ENCODE measurements at regions of chr1 and their contacts with region 1.

Region 1: DNA sequence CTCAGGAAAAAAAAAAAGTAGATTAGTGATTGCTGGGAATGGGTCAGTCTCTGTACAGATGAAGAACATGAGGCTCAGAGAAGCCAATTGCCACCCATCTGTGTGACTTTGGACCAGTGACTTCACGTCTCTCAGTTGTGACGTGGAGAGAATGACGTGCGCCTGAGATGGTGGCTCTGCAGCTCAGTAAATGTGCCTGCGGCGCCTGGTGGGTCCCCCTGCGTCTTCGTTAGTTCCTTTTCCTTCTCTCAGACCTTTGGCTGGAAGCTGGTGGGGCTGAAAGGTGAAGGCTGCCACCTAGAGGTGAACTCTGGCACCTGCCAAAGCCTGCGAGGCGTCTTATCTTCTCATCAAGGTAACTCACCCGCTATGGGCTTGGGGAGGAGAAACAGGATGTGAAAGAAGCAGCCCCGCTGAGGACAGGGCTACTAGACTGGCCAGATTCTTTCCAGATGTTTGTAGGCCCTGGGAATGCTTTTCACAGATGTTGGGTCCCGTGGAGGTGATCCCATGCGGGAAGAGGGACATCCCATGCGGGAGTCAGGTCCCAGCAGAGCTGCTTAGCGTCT is 8.7 kb upstream of the E2F2 start:
- DNase-seq: peak; percentile 95 to 98
- H3K4me3 ChIP-seq: no peak overlapping the region
- H3K27ac ChIP-seq: no peak overlapping the region
- H3K4me1 ChIP-seq: peaks cover 0 to under 1% (median 0%) of the 10 kb centered on the region in 4 experiments; a peak in 2 of 7 replicates
- H3K27me3 ChIP-seq: no peaks in the 10 kb centered on the region
- CTCF ChIP-seq: peak; percentile 82 to 97 (median 94)
- EP300 ChIP-seq: peak in 1 of 2 experiments; percentile 53; a peak in 1 of 3 replicates
- POLR2A ChIP-seq: no peak
- RAD21 ChIP-seq: peak; percentile 97 to 98

Region 2: GRCh38 chr1:23524716-23525401 is 14.9 kb before region 1 on chr1:
- CTCF ChIA-PET with region 1: interaction called, 32 read pairs
- POLR2A ChIA-PET with region 1: interaction called, 4 read pairs
- DNase-seq: no peak
- H3K4me3 ChIP-seq: no peak overlapping the region
- H3K27ac ChIP-seq: no peak overlapping the region
- H3K4me1 ChIP-seq: peaks cover 6 to 17% (median 9%) of the 10 kb centered on the region in 4 experiments
- H3K27me3 ChIP-seq: peaks cover 1 to 9% (median 5%) of the 10 kb centered on the region in 4 experiments; a peak in 6 of 7 replicates
- CTCF ChIP-seq: no peak
- EP300 ChIP-seq: no peak
- POLR2A ChIP-seq: no peak
- RAD21 ChIP-seq: no peak

Region 3: DNA sequence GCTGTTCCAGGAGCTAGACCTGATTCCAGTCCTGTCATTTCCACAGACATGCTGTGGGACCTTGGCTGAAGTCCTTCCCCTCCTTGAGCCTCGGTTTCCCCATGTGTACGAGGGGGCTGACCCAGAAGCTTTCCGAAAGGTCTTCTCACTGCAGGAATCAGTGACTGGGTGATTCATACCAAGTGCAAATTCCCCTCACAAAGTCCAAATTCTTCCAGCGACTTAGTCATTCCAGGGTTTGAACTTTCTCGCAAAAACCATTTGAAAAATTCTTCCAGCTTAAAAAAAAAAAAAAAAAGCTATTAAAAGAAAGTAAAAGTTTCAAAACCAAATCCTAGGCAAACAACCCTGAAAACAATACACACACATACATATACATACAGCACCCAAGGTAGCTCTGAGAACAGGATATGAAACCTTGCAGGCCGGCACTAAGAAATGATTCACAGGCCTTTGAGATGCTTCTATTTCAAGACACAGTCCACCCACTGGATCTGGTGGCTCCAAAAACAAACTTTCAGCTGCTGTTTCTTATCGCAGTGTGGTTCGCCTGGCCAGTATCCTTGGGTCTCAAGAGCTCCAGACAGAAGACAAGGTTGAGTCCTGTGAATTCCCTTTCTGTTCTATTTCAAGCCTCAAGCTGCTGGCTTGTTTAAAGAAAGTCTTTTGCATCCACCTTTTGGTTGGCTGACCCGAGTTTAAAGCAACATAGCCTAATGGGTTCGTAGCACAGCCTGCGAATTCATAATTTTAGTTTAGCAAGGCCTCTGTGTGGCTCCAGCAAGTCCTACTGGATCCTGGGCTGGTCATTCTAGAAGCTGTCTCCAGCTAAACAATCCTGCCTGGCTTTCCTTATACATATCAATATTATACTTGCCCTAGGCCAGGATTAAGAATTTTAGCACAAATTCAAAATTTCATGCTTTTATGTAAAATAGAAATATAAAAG is 37.5 kb after region 1 on chr1:
- CTCF ChIA-PET with region 1: interaction called, 16 read pairs
- POLR2A ChIA-PET with region 1: no interaction called
- DNase-seq: no peak
- H3K4me3 ChIP-seq: no peak overlapping the region
- H3K27ac ChIP-seq: no peak overlapping the region
- H3K4me1 ChIP-seq: peaks cover 2 to 6% (median 3%) of the 10 kb centered on the region in 4 experiments; a peak in 4 of 7 replicates
- H3K27me3 ChIP-seq: no peaks in the 10 kb centered on the region
- CTCF ChIP-seq: no peak
- EP300 ChIP-seq: no peak
- POLR2A ChIP-seq: no peak
- RAD21 ChIP-seq: no peak

Region 4: DNA sequence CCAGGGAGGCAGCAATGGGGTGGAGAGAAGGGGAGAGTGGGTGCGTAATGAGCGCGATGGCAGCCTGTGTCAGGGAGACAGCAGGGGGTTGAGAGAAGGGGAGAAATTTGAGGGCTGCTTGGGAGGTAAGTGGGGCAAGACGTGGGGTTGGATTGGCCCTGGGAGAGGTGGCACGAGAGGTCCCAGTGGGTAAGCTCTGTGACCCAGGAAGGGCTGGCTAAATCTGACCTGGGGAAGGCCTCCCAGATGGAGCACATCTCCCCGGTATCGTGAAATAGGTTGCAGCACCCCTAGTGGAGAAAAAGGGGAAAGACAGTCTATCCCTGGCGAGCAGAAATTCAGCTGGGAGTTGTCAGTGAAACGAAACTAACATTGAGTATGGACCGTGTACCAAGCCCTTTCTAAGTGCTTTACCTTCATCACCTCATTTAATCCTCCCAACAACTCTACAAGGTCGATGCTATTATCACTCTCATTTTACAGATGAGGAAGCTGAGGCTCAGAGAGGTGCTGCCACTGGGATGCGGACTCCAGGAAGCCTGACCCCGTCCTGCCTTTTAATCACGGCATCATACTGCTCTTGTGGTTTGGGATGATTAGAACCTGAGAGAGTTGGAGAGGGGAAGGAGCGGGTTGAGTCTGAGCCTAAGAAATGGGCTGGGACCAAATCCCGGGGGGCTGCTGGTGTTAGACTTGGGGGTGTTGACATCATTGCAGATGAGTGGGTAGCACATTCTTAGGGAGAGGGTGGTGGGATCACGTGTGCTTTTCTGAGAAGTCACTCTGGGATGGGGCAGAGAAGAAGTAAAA is 95.3 kb after region 1 on chr1:
- CTCF ChIA-PET with region 1: interaction called, 706 read pairs
- POLR2A ChIA-PET with region 1: interaction called, 5 read pairs
- DNase-seq: peak in 1 of 2 experiments; percentile 71
- H3K4me3 ChIP-seq: no peak overlapping the region
- H3K27ac ChIP-seq: no peak overlapping the region
- H3K4me1 ChIP-seq: peaks cover 0 to 17% (median under 1%) of the 10 kb centered on the region in 4 experiments; a peak in 5 of 7 replicates
- H3K27me3 ChIP-seq: no peaks in the 10 kb centered on the region
- CTCF ChIP-seq: peak; percentile 60 to 97 (median 74)
- EP300 ChIP-seq: no peak
- POLR2A ChIP-seq: no peak
- RAD21 ChIP-seq: peak; percentile 74 to 85

Region 5: DNA sequence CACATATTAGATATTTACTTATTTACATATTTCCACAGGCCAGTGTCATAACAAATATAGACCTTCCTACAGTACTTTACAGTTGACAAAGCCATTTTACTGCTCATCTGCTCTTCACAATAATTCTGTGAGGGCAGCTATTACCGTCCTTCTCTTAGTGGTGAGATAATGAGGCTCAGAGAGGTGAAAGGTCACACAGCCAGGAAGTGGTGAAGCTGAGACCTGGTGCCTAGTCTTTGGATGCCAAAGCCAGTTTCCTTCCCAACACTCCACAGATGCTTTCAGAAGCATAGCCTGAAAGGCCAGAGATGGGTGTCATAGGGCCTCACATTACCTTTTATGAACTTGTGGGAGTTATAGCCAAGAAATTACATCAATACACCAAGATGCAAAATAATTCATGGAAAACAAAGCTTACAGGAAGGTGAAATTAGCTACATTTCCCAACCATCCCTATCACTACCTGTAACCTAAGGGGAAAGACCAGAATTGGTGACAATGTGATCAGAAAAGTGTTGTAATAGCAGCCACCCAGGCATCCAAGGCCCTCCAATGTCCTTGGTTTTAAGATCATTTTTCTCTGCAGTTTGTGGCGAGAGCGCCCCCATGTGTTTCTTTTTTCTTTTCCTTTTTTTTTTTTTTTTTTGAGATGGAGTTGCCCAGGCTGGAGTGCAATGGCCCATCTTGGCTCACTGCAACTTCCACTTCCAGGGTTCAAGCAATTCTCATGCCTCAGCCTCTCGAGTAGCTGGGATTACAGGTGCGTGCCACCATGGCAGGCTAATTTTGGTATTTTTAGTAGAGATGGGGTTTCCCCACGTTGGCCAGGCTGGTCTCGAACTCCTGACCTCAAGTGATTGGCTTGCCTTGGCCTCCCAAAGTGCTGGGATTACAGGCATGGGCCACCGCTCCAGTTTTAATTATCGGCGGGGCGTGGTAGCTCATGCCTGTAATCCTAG is 125.3 kb after region 1 on chr1:
- CTCF ChIA-PET with region 1: interaction called, 146 read pairs
- POLR2A ChIA-PET with region 1: no interaction called
- DNase-seq: no peak
- H3K4me3 ChIP-seq: no peak overlapping the region
- H3K27ac ChIP-seq: no peak overlapping the region
- H3K4me1 ChIP-seq: no peaks in the 10 kb centered on the region
- H3K27me3 ChIP-seq: no peaks in the 10 kb centered on the region
- CTCF ChIP-seq: peak; percentile 1 to 60 (median 53)
- EP300 ChIP-seq: no peak
- POLR2A ChIP-seq: no peak
- RAD21 ChIP-seq: peak; percentile 64 to 68